Prostate gland (tissue), 2 donors: ENCODE measurements at regions of chr19 and their contacts with region 1.

Region 1: DNA sequence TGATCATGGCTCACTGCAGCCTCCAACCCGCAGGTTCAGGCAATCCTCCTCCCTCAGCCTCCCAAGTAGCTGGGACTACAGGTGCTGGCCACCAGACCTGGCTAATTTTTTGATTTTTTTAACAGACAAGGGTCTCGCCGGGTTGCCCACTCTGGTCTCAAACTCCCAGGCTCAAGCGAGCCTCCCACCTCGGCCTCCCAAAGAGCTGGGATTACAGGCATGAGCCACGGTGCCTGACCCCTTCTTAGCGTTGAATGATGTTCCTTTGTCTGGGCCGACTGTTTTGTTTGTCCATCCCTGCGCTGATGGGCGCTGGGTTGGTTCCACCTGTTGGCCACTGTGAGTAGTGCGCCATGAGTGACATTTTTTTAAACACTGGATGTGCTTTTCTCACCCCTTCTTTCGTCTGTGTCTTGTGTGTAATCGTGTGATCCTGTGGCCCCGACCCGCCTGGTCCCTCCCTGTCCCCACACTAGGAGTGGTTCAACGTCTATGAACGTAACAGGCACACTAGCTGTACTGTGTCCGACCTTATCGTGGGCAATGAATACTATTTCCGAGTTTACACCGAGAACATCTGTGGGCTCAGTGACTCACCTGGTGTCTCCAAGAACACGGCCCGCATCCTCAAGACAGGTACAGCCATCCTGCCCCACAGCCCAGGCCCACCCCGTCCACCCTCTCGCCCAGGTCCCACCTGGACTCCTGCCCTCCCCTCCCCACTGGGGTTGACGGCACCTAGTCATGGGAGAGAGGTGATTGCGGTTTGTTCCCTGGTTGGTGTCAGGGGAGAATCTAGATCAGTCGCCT is 15.0 kb upstream of the EMC10 start:
- DNase-seq: peak; percentile 36
- H3K4me3 ChIP-seq: no peak overlapping the region
- H3K27ac ChIP-seq: no peak overlapping the region
- H3K4me1 ChIP-seq: no peaks in the 10 kb centered on the region
- H3K27me3 ChIP-seq: peaks cover 8% of the 10 kb centered on the region
- CTCF ChIP-seq: peak; percentile 37 to 83 (median 70)
- POLR2A ChIP-seq: no peak

Region 2: GRCh38 chr19:50368649-50369570 is 92.4 kb before region 1 on chr19:
- intact Hi-C with region 1: loop called (anchors 2 kb)
- DNase-seq: peak; percentile 84
- H3K4me3 ChIP-seq: peak overlapping the region; percentile 46
- H3K27ac ChIP-seq: peak overlapping the region; percentile 58 to 63
- H3K4me1 ChIP-seq: no peaks in the 10 kb centered on the region
- H3K27me3 ChIP-seq: no peaks in the 10 kb centered on the region
- CTCF ChIP-seq: peak; percentile 86 to 91 (median 89)
- POLR2A ChIP-seq: no peak

Region 3: DNA sequence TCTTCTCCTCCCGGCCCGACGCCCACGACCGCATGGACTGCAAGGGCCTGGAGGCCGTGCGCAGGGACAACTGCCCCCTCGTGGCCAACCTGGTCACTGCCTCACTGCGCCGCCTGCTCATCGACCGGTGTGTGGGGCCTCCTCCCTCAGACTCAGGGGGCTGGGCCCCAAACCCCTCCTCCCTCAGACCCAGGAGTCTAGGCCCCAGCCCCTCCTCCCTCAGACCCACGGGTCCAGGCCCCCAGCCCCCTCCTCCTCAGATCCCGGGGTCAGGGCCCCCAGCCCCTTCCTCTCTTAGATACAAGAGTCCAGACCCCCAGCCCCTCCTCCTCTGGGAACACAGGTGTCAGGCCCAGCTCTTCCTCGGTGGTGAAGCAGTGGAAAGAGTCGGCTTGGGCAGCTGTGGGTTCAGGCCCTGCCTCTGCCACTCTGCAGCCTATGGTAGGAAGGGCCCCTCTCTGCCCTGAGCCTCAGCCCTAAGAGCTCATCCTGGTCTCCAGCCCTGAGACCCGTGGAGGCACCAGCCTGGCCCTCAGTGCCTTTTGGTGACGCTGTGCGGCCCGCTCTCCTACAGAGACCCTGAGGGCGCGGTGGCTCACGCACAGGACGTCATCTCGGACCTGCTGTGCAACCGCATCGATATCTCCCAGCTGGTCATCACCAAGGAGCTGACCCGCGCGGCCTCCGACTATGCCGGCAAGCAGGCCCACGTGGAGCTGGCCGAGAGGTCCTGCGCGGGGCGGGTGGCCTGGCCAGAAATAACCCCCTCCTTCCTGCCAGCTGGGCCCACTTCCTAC is 46.2 kb before region 1 on chr19:
- intact Hi-C with region 1: no loop called
- DNase-seq: peak; percentile 48
- H3K4me3 ChIP-seq: no peak overlapping the region
- H3K27ac ChIP-seq: no peak overlapping the region
- H3K4me1 ChIP-seq: no peaks in the 10 kb centered on the region
- H3K27me3 ChIP-seq: peaks cover 3% of the 10 kb centered on the region
- CTCF ChIP-seq: peak; percentile 51 to 72 (median 68)
- POLR2A ChIP-seq: no peak

Region 4: DNA sequence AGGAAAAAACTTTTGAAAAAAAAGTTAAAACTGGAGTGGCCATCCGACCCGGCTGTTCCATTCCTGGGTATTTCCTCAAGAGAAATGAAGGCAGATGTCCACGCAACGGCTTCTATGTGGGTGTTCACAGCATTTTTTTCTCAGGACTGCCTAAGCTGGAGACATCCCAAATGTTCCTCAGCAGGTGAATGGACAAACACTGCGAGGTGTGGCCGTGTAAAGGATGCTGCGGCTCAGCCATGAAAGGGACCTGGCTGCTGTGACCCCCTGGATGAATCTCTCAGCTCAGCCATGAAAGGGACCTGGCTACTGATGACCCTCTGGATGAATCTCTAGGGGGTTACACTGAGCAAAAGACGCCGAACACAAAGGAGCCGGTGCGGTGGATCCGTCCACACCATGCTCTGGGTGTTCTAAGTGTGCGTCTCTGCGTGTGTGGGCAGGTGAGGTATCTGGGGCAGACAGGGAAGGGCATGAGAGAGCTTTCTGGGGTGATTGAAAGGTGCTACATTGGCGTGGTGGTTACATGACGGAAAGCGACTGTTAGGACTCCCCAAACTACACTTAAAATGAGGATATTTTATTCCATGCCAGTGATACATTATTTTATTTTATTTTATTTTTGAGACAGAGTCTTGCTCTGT is 59.7 kb after region 1 on chr19:
- intact Hi-C with region 1: no loop called
- DNase-seq: no peak
- H3K4me3 ChIP-seq: no peak overlapping the region
- H3K27ac ChIP-seq: no peak overlapping the region
- H3K4me1 ChIP-seq: no peaks in the 10 kb centered on the region
- H3K27me3 ChIP-seq: no peaks in the 10 kb centered on the region
- CTCF ChIP-seq: no peak
- POLR2A ChIP-seq: no peak

Region 5: DNA sequence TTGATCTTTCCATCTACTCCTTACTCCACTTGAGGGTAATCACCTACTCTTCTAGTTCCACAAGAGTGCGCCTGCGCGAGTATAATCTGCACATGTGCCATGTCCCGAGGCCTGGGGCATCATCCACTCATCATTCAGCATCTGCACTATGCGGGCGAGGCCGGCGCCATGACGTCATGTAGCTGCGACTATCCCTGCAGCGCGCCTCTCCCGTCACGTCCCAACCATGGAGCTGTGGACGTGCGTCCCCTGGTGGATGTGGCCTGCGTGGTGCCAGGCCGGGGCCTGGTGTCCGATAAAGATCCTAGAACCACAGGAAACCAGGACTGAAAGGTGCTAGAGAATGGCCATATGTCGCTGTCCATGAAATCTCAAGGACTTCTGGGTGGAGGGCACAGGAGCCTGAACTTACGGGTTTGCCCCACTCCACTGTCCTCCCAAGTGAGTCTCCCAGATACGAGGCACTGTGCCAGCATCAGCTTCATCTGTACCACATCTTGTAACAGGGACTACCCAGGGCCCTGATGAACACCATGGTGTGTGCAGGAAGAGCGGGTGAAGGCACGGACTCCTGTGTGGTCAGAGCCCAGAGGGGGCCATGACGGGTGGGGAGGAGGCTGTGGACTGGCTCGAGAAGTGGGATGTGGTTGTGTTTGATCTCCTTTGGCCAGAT is 409.3 kb after region 1 on chr19:
- intact Hi-C with region 1: no loop called
- DNase-seq: no peak
- H3K4me3 ChIP-seq: no peak overlapping the region
- H3K27ac ChIP-seq: peak overlapping the region; percentile 97 to 99
- H3K4me1 ChIP-seq: peaks cover 16% of the 10 kb centered on the region
- H3K27me3 ChIP-seq: no peaks in the 10 kb centered on the region
- CTCF ChIP-seq: no peak
- POLR2A ChIP-seq: no peak